ENCODE measurements at regions of chr1 and their contacts with region 1.

Region 1: GRCh38 chr1:181088079-181089016 is at the start of gene IER5:
- DNase-seq: peak; percentile 91 to 98 (median 96)
- H3K4me3 ChIP-seq: peak within 1 kb of the TSS; percentile 64 to 97 (median 84)
- H3K27ac ChIP-seq: peak within 1 kb of the TSS in 58 of 59 donors; percentile 17 to 94 (median 83)
- H3K27me3 ChIP-seq: no peaks in the 10 kb centered on the region
- CTCF ChIP-seq: peak in 48 of 56 donors; percentile 14 to 64 (median 34)
- total RNA-seq, gene IER5: 8.1 to 74.9 (median 17.6) TPM

Region 2: DNA sequence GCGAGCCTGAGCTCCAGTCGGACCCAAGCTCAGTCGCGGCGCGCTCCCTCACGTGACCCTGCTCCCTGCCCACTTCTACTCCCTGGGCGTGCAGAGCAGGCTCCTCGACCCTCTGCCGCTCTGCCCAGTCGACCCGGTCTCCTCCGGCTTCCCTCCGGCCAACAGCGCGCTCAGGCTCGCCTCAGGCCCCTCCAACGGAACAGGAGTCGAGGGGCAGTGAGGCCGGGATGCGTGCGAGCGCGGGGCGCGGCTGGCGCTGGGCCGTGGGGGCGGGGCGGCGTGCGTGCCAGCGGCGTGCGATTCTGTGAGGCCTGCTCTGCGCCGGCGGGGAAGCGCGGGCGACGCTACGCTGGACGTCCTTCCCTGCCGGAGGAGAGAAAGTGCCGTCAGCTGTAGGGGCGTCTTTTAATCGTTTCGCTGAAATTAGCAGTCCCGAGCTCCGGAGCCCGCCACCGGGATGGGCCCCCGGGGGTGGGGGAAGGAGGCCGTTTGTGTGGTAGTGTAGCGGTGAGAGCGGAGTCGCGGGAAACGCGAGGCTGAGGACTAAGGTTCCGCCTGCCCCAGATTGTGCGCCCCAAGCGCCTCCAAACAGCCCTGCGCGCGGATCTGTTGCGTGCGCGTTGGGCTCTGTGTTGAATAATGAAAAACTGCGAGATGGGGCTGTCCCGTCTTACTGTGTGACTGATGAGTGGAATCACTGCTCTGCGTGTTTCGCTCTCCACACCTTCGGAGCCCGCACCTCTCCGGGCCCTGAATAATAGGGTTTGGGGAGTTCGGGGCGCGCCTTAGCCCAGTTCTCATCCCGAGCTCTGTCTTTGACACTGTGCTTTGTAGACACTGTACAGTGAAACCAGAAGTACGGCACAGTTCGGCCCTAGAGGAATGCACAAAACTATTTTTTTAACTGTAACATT is 585.7 kb before region 1 on chr1 and contains the start of gene ACBD6:
- intact Hi-C with region 1: loop called in 1 of 2 experiments (anchors 2 kb)
- DNase-seq: peak; percentile 71 to 91 (median 82)
- H3K4me3 ChIP-seq: peak within 1 kb of the TSS; percentile 66 to 100 (median 91)
- H3K27ac ChIP-seq: peak within 1 kb of the TSS; percentile 73 to 98 (median 93)
- H3K27me3 ChIP-seq: no peaks in the 10 kb centered on the region
- CTCF ChIP-seq: peak in 37 of 56 donors; percentile 6 to 50 (median 26)
- total RNA-seq, gene ACBD6: 31.2 to 64.0 (median 43.3) TPM

Region 3: DNA sequence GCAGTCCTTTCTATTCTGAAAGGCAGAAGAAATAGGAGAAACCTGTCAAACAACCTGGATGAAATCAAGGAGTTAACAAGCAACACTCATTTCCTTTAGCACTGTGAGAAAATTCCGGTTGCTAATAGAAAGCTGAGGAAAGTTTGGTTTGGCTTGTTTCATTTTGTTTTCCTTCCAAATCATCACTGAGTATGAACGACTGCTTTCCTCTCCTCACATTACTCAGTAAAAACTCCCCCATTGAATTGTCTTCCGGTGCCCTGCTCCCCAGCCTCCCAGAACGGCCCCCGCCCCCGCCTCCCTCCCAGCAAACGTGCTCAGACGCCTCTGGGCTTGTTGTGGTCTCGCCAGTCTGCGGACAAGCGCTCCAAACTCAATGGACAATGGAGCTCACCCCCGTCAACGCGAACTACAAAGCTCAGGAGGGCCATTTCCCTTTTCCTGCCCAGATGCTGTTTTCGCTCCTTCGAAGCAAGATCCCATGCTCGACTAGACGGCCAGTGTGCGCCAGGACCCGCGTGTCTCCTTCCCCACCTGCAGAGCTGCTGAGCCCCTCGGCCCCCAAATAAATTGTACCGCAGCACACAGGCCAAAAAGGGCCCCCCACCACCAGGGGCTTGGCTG is 66.4 kb before region 1 on chr1:
- intact Hi-C with region 1: loop called in 1 of 2 experiments (anchors 5 kb)
- DNase-seq: peak in 9 of 10 donors; percentile 38 to 73 (median 53)
- H3K4me3 ChIP-seq: peak overlapping the region; percentile 74 to 100 (median 93)
- H3K27ac ChIP-seq: peak overlapping the region; percentile 63 to 96 (median 89)
- H3K27me3 ChIP-seq: no peaks in the 10 kb centered on the region
- CTCF ChIP-seq: peak in 1 of 56 donors; percentile 7

Region 4: GRCh38 chr1:181044449-181044966 is 43.8 kb before region 1 on chr1:
- intact Hi-C with region 1: loop called (anchors 2 to 5 kb)
- DNase-seq: no peak
- H3K4me3 ChIP-seq: no peak overlapping the region
- H3K27ac ChIP-seq: no peak overlapping the region
- H3K27me3 ChIP-seq: no peaks in the 10 kb centered on the region
- CTCF ChIP-seq: no peak

Region 5: GRCh38 chr1:181142096-181142958 is 54.0 kb after region 1 on chr1:
- intact Hi-C with region 1: loop called (anchors 1 to 2 kb)
- DNase-seq: peak; percentile 88 to 95 (median 94)
- H3K4me3 ChIP-seq: peak overlapping the region; percentile 12 to 69 (median 47)
- H3K27ac ChIP-seq: peak overlapping the region in 58 of 59 donors; percentile 17 to 93 (median 77)
- H3K27me3 ChIP-seq: no peaks in the 10 kb centered on the region
- CTCF ChIP-seq: peak; percentile 92 to 100 (median 98)

Measured in dorsolateral prefrontal cortex (tissue), 120 donors.